ENCODE measurements at regions of chr21 and their contacts with region 1.

Region 1: DNA sequence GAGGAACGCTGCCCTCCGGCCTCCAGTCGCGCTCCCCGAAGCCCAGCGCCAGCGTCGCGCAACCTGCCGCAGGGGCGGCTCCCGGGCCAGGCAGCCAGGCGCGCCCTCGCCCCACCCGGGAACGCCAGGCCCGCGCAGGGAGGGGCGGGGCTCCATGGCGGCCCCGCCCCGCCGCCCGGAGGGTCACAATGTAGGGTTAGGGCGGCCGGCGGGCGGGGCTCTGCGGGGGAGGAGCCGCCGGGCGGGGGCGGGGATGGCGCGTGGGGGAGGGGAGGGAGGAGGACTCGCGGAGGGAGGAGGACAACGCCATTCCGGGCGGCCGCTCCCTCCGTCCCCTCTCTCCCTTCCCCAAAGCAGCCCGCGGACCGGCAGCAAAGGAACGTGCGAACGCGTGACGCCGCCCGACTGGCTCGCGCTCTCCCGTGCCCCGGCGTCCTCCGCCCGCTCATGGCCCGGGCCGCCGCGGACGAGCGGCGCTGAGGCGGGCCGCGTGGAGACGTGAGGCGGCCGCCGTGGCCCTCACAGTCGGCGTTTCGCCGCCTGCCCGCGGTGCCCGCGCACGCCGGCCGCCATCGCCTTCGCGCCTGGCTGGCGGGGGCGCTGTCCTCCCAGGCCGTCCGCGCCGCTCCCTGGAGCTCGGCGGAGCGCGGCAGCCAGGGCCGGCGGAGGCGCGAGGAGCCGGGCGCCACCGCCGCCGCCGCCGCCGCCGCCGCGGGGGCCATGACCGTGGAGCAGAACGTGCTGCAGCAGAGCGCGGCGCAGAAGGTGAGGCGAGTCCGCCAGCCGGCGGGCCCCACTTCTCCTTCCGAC is at the start of gene USP25:
- DNase-seq: peak; percentile 80
- ATAC-seq: peak; percentile 89
- H3K4me3 Mint-ChIP-seq: peak within 1 kb of the TSS; percentile 88
- H3K27ac Mint-ChIP-seq: peak within 1 kb of the TSS; percentile 88
- H3K4me1 Mint-ChIP-seq: peaks cover 39% of the 10 kb centered on the region
- H3K27me3 Mint-ChIP-seq: no peaks in the 10 kb centered on the region
- CTCF ChIP-seq: no peak
- total RNA-seq, gene USP25: 37.2 and 38.3 TPM in 2 replicates

Region 2: GRCh38 chr21:14215971-14216641 is 1513.8 kb before region 1 on chr21 and contains the start of gene RBM11:
- CTCF ChIA-PET with region 1: no interaction called
- POLR2A ChIA-PET with region 1: no interaction called
- intact Hi-C with region 1: loop called (anchors 5 kb)
- DNase-seq: peak; percentile 74
- ATAC-seq: peak; percentile 97
- H3K4me3 Mint-ChIP-seq: peak within 1 kb of the TSS; percentile 88
- H3K27ac Mint-ChIP-seq: no peak within 1 kb of the TSS
- H3K4me1 Mint-ChIP-seq: peaks cover 7% of the 10 kb centered on the region
- H3K27me3 Mint-ChIP-seq: peaks cover 11% of the 10 kb centered on the region
- CTCF ChIP-seq: no peak
- total RNA-seq, gene RBM11: 1.6 TPM in 2 replicates

Region 3: DNA sequence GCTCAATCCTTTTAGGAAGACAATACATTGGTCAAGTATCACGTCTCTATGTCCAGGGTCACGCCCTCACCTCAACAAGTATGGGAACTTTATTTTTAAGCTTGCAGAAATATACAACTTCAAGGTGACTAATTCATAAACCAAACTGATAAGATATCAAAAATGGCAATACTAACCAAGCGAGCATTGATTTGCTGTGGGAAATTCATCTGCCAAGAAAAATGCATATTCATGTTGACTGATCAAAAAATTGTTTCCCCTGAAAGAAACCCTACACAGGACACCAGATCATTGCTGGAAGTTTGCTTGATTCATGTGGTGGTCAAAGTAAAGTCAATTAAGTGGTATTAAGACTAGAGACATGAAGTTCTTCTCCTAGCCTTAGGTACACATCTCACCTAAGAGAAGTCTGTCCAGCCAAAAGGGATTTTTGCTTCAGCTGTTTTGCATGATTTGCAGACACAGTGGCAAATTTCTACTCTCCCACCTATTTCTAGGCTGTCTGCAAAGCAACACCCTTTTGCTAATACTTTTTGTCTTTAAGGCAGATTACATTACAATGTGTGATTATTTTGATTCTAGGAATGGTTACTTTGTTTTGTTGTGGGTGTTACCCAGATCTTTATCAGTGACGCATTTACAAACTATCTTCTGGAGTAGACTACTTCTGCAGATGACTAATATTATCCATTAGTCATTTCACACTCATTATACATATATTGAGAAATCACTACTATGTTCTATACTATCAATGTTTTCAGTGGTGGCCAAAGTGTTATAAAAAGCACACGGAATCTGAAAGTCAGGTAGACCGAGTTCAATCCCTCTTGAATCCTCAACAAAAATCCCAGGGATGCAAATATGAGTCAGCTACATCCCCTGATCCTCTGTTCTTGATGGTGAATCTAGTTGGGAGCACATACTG is 1196.1 kb before region 1 on chr21:
- CTCF ChIA-PET with region 1: no interaction called
- POLR2A ChIA-PET with region 1: no interaction called
- intact Hi-C with region 1: loop called (anchors 5 kb)
- DNase-seq: no peak
- ATAC-seq: peak; percentile 85
- H3K4me3 Mint-ChIP-seq: peak overlapping the region; percentile 71
- H3K27ac Mint-ChIP-seq: peak overlapping the region; percentile 98
- H3K4me1 Mint-ChIP-seq: peaks cover 79% of the 10 kb centered on the region
- H3K27me3 Mint-ChIP-seq: no peaks in the 10 kb centered on the region
- CTCF ChIP-seq: no peak

Region 4: GRCh38 chr21:14762734-14763694 is 966.9 kb before region 1 on chr21:
- CTCF ChIA-PET with region 1: no interaction called
- POLR2A ChIA-PET with region 1: no interaction called
- intact Hi-C with region 1: loop called (anchors 5 kb)
- DNase-seq: no peak
- ATAC-seq: peak; percentile 95
- H3K4me3 Mint-ChIP-seq: no peak overlapping the region
- H3K27ac Mint-ChIP-seq: no peak overlapping the region
- H3K4me1 Mint-ChIP-seq: peaks cover 33% of the 10 kb centered on the region
- H3K27me3 Mint-ChIP-seq: no peaks in the 10 kb centered on the region
- CTCF ChIP-seq: no peak

Region 5: DNA sequence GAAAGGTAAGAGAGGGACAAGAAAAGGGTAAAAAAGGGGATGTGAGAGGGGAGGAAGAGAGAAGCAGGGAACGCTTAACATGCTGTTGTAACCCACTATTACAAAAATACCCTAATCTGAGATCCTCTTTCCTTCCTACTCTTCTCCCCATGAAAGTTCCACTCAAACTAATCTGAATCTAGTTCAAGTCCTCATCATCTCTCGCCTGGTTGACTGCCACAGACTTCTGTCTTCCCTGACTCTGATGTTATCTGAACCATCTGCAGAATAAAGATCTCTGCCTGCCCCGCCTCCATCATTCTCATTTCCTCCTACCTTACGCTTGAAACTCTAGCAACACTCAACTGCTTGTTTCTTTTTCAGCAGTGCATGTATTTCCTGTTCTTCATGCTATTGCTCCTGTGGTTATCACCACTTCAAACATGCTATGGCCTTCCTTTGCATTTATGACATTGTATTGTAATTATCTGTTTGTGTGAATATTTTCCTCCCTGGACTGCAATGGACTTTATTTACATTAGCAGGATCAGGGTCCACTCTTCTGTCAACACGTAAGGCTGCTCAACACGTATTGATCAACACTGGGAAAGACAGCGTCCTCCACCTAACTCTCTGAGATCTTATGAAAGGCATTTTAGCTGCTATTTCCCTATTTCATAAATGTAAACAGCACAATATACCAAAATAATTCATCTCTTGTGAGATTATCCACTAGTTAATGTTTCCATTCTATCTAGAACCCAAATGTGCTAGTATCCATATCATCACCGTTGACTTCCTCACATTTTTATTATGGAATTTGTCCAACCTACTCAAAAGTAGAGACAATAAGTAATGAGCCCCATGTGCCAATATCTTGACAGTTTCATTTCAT is 215.6 kb before region 1 on chr21:
- CTCF ChIA-PET with region 1: no interaction called
- POLR2A ChIA-PET with region 1: no interaction called
- intact Hi-C with region 1: loop called (anchors 5 kb)
- DNase-seq: peak; percentile 15
- ATAC-seq: peak; percentile 97
- H3K4me3 Mint-ChIP-seq: peak overlapping the region; percentile 3
- H3K27ac Mint-ChIP-seq: peak overlapping the region; percentile 69
- H3K4me1 Mint-ChIP-seq: peaks cover 18% of the 10 kb centered on the region
- H3K27me3 Mint-ChIP-seq: no peaks in the 10 kb centered on the region
- CTCF ChIP-seq: no peak

Region 6: DNA sequence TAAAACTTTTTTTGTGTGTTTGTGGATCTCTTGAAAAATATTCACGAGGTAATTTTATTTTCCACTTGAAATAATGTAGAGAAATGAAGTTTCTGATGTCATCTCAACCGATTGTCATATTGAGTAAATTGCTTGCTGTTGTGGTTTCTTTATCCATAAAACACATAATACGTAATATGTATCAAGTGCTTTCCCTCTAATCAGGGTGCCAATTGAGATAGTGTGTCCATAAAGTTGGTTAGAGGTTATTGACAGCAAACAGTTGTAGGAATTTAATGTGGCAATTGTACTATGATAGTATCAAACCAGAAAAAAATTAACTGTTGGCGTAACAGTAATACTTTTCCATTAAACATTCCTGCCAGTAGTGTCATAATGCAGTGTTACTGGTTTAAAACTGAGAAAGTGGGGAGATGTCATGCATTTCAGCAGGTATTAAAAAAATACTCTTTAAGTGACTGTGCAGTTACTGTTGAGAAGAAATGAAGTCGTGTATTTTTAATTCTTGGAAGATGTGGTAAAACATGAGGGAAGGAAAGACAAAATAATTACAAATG is 38.2 kb after region 1 on chr21:
- CTCF ChIA-PET with region 1: no interaction called
- POLR2A ChIA-PET with region 1: no interaction called
- intact Hi-C with region 1: loop called (anchors 5 kb)
- DNase-seq: no peak
- ATAC-seq: no peak
- H3K4me3 Mint-ChIP-seq: no peak overlapping the region
- H3K27ac Mint-ChIP-seq: no peak overlapping the region
- H3K4me1 Mint-ChIP-seq: peaks cover 7% of the 10 kb centered on the region
- H3K27me3 Mint-ChIP-seq: no peaks in the 10 kb centered on the region
- CTCF ChIP-seq: no peak

Region 7: GRCh38 chr21:15870819-15871218 is 140.9 kb after region 1 on chr21:
- CTCF ChIA-PET with region 1: no interaction called
- POLR2A ChIA-PET with region 1: no interaction called
- intact Hi-C with region 1: loop called (anchors 10 kb)
- DNase-seq: no peak
- ATAC-seq: no peak
- H3K4me3 Mint-ChIP-seq: peak overlapping the region; percentile 24
- H3K27ac Mint-ChIP-seq: no peak overlapping the region
- H3K4me1 Mint-ChIP-seq: peaks cover 14% of the 10 kb centered on the region
- H3K27me3 Mint-ChIP-seq: no peaks in the 10 kb centered on the region
- CTCF ChIP-seq: no peak